SK-N-SH (cell line): ENCODE measurements at regions of chr11 and their contacts with region 1.

Region 1: DNA sequence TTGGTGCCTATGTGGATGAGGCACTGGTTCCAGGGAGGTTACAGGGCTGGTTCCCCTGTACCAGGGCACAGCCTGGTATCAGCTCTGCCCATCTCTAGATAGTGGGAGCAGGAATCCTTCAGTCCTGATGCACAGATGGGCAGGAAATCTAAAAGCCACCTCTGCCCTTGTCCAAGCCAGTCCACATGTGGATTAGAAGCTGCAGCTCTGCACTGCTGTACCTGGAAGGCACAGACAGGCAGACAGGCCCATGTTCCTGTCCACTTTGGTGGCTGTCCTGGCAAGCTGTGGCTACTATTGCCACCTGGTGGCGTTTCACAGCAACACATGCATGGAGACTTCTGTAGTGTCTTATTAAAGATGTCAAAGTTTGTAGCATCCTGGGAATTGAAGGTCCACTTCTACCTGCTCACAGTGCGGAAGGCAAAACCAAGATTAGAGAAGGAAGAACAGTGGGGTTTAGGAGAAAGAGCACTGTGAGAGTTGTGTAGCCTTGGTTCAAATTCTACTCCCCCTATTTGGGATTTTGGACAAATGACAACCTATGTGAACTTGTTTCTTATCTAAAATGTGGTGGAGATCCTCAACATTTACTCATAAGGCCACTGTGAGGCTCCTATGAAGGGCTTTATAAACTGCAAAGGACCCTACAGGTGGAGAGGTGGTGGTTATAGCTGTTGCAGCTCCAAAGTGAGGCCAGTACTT is 30.1 kb downstream of the NAV2 start:
- DNase-seq: peak; percentile 68
- H3K4me3 ChIP-seq: no peak overlapping the region; a peak in 1 of 4 replicates
- H3K27ac ChIP-seq: peak overlapping the region in 1 of 2 experiments; percentile 93; a peak in 2 of 4 replicates
- H3K4me1 ChIP-seq: peaks cover 6 to 55% of the 10 kb centered on the region in 2 experiments; a peak in 2 of 4 replicates
- H3K27me3 ChIP-seq: no peaks in the 10 kb centered on the region
- CTCF ChIP-seq: peak; percentile 86
- EP300 ChIP-seq: peak in 1 of 2 experiments; percentile 90; a peak in 2 of 4 replicates
- RAD21 ChIP-seq: peak; percentile 93

Region 2: GRCh38 chr11:19561011-19561410 is 181.7 kb before region 1 on chr11:
- CTCF ChIA-PET with region 1: interaction called, 92 read pairs
- POLR2A ChIA-PET with region 1: interaction called, 13 read pairs
- DNase-seq: no peak
- H3K4me3 ChIP-seq: no peak overlapping the region
- H3K27ac ChIP-seq: peak overlapping the region in 1 of 2 experiments; percentile 96; a peak in 2 of 4 replicates
- H3K4me1 ChIP-seq: peaks cover 0 to 64% of the 10 kb centered on the region in 2 experiments; a peak in 2 of 4 replicates
- H3K27me3 ChIP-seq: no peaks in the 10 kb centered on the region
- CTCF ChIP-seq: no peak
- EP300 ChIP-seq: no peak
- RAD21 ChIP-seq: no peak

Region 3: DNA sequence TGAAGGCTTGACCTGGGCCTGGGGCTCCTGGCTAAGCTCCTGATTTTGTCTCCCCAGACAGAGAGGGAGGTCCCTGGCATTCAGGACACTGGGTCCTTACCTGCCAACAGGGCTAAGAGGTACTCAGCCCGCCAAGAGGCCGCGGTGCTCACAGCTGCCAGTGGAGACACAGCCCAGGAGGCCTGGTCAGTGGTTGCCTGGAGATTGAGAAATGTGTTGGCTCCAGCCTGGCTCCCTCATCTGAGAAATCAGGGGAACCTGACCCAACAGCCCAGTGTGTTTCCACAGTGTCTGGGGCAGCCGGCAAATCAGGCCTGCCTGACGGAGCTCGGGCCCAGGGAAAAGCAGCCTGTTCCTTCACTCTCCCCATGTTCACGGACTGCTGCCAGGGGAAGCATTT is 109.5 kb before region 1 on chr11:
- CTCF ChIA-PET with region 1: interaction called, 13 read pairs
- POLR2A ChIA-PET with region 1: no interaction called
- DNase-seq: no peak
- H3K4me3 ChIP-seq: no peak overlapping the region
- H3K27ac ChIP-seq: peak overlapping the region; percentile 61 to 92; a peak in 3 of 4 replicates
- H3K4me1 ChIP-seq: peaks cover 22 to 25% of the 10 kb centered on the region in 2 experiments
- H3K27me3 ChIP-seq: no peaks in the 10 kb centered on the region
- CTCF ChIP-seq: no peak
- EP300 ChIP-seq: no peak
- RAD21 ChIP-seq: no peak

Region 4: GRCh38 chr11:19698493-19699292 is 44.0 kb before region 1 on chr11:
- CTCF ChIA-PET with region 1: interaction called, 10 read pairs
- POLR2A ChIA-PET with region 1: no interaction called
- DNase-seq: no peak
- H3K4me3 ChIP-seq: no peak overlapping the region
- H3K27ac ChIP-seq: no peak overlapping the region
- H3K4me1 ChIP-seq: peaks cover 7 to 31% of the 10 kb centered on the region in 2 experiments; a peak in 2 of 4 replicates
- H3K27me3 ChIP-seq: no peaks in the 10 kb centered on the region
- CTCF ChIP-seq: no peak
- EP300 ChIP-seq: no peak
- RAD21 ChIP-seq: no peak

Region 5: GRCh38 chr11:19723572-19724342 is 19.0 kb before region 1 on chr11:
- CTCF ChIA-PET with region 1: interaction called, 45 read pairs
- POLR2A ChIA-PET with region 1: interaction called, 26 read pairs
- DNase-seq: peak; percentile 85
- H3K4me3 ChIP-seq: no peak overlapping the region
- H3K27ac ChIP-seq: peak overlapping the region; percentile 54 to 99
- H3K4me1 ChIP-seq: peaks cover 15 to 88% of the 10 kb centered on the region in 2 experiments; a peak in 3 of 4 replicates
- H3K27me3 ChIP-seq: no peaks in the 10 kb centered on the region
- CTCF ChIP-seq: no peak
- EP300 ChIP-seq: peak; percentile 46 to 96; a peak in 2 of 4 replicates
- RAD21 ChIP-seq: peak; percentile 7; the same call in 1 of the 2 replicates

Region 6: DNA sequence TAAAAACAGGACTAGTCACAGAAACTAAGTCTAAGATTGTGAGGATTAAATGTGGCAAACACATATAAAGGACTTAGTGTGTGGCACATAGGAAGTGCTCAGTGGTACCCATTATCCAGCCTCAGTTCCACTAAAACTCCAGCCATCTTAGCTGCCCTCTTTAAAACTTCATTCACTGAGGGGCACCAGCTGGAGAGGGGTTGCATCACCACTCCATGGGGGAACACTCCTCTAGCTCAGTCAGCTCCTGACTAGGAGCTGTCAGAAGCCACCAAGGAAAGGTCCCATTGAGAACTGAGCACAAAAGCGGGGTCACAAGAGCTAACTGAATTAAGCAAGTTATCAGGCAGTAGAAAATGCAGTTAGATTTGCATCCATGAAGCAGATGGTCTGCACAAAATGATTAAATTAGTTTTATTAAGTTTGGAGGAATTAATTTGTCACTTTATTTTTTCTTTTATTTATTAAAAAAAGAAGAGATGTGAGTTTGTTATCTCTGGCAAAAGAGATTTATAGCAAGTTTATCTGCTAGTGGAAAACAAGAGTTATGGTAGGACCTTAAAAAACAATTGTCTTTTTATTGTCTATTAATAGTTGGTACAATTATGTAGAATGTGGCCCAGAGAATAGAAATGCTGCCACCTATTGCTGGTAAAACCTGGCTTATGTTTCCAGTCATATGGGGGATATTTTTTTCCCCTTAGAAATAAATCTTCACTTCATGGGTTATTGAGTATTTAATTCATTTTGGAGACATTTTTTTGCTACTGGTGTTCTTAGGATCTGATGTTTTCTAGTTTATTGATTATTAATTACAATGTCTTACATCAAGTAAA is 65.6 kb after region 1 on chr11:
- CTCF ChIA-PET with region 1: interaction called, 12 read pairs
- POLR2A ChIA-PET with region 1: interaction called, 3 read pairs
- DNase-seq: peak; percentile 39
- H3K4me3 ChIP-seq: no peak overlapping the region
- H3K27ac ChIP-seq: peak overlapping the region; percentile 12 to 69; a peak in 2 of 4 replicates
- H3K4me1 ChIP-seq: peaks cover 4 to 65% of the 10 kb centered on the region in 2 experiments; a peak in 3 of 4 replicates
- H3K27me3 ChIP-seq: no peaks in the 10 kb centered on the region
- CTCF ChIP-seq: peak; percentile 48
- EP300 ChIP-seq: peak in 1 of 2 experiments; percentile 92; a peak in 2 of 4 replicates
- RAD21 ChIP-seq: peak; percentile 65